Activated CD4-positive, alpha-beta T cell treated with anti-CD3 and anti-CD28 coated beads, Interleukin-2, amount 10 ng/mL, durations not matched to agents 7 days and 5 days (primary cell): ENCODE measurements at regions of chr10 and their contacts with region 1.

Region 1: DNA sequence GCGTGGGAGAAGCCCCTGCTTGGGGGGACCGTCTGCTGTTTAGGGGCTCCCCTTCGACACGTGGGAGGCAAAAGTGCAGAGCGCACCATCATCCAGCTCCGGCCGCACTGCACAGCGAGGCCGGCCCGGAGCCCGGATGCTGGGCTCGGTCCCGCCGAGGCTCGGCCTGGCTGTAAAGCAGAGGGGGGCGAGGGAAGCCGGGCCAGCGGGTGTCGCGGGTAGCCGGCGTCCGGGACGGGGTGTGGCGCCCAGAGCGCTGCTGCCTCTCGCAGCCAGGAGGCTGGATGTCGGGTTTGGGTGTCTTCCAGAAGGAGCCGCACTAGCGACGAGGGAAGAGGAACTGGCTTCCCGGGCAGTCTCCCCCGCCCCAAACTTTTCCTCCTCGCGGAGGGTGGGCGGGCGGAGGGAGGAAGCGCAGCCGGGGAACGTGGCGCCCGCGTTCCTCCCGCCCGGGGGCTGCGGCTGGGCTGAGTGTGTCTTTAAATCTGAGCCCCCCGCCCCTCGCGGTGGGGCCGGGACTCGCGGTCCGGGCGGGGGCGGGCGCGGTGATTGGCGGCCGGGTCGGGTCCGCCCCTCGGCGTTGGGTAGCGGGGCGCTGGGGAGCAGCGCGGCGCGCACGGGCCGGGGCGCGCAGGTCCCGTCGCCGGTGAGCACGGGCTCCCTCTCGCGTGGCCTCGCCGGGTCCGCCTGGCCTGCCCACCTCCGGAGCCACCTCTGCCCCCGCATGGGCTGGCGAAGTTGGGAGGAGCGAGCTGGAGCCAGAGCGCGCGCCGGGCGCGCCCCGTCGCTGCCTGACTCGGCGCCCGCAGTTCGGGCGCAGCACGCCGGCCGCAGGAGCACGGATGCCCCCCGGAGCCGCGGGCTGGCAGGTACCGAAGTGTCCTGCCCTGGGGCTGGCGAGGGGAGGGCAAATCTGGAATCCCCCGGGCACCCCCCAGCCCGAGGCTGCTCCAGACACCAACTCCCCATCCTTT is at the start of gene PALD1:
- DNase-seq: peak; percentile 18
- H3K4me3 Mint-ChIP-seq: peak within 1 kb of the TSS; percentile 70
- H3K27ac Mint-ChIP-seq: peak within 1 kb of the TSS; percentile 69
- H3K4me1 Mint-ChIP-seq: peaks cover 42% of the 10 kb centered on the region
- H3K27me3 Mint-ChIP-seq: peaks cover 35% of the 10 kb centered on the region
- total RNA-seq, gene PALD1: 1.2 to 1.5 TPM

Region 2: GRCh38 chr10:70461215-70461986 is 17.1 kb before region 1 on chr10:
- CTCF ChIA-PET with region 1: interaction called, 17 read pairs
- POLR2A ChIA-PET with region 1: no interaction called
- DNase-seq: peak; percentile 54
- H3K4me3 Mint-ChIP-seq: no peak overlapping the region
- H3K27ac Mint-ChIP-seq: no peak overlapping the region
- H3K4me1 Mint-ChIP-seq: peaks cover 2% of the 10 kb centered on the region
- H3K27me3 Mint-ChIP-seq: peaks cover 40% of the 10 kb centered on the region